ENCODE measurements at regions of chr11 and their contacts with region 1.

Region 1: DNA sequence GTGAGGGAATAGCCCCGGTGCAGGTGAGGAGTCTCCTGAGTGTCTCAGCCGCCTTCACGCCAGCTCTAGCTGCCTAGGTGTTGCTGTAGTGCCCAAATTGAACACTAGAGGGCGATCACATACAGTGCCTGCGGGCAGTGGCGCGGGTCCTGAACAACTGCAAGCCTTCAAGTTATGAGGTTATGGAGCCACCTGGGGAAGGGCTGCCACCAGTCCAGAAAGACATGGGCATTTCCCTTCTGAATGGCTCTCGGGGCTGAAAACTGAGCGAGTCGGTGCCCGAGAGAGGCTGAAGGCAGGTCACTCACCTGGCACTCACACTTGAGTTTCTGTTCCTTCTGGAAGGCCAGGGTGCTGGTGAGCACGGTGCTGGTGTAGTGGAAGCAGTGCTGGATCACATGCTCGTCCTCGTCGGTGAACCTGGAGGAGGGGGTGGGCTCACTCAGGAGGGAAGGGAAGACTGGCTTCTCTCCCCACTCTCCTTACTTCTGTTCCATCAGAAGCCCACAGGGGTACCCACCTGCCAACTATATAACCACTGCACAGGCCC is 88.4 kb downstream of the PDE2A start:
- DNase-seq: peak; percentile 49
- ATAC-seq: peak; percentile 81
- H3K4me3 Mint-ChIP-seq: peak overlapping the region; percentile 87
- H3K27ac Mint-ChIP-seq: no peak overlapping the region
- H3K4me1 Mint-ChIP-seq: peaks cover 31% of the 10 kb centered on the region
- H3K27me3 Mint-ChIP-seq: peaks cover 21% of the 10 kb centered on the region
- CTCF ChIP-seq: peak; percentile 54

Region 2: DNA sequence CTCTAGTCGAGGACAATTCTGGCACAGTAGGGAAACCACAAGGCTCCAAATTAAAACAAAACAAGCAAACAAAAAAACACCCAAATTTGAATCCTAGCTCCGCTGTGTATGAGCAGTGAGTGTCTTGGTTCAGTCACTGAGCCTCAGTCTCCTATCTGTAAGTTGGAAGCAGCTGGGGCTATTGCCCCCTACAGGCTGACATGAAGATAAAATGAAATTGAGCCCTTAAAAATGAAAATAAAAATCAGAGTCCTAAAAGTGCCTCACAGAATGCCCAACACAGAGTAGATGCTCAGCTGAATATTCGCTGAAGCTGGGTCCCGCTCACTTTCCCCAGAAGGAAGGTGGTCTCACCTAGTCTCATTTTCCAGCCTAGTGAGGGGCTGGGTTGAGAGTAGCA is 23.2 kb after region 1 on chr11:
- CTCF ChIA-PET with region 1: interaction called, 14 read pairs
- POLR2A ChIA-PET with region 1: no interaction called
- intact Hi-C with region 1: loop called (anchors 1 kb)
- DNase-seq: no peak
- ATAC-seq: no peak
- H3K4me3 Mint-ChIP-seq: no peak overlapping the region
- H3K27ac Mint-ChIP-seq: no peak overlapping the region
- H3K4me1 Mint-ChIP-seq: peaks cover 11% of the 10 kb centered on the region
- H3K27me3 Mint-ChIP-seq: peaks cover 15% of the 10 kb centered on the region
- CTCF ChIP-seq: peak; percentile 28

Region 3: DNA sequence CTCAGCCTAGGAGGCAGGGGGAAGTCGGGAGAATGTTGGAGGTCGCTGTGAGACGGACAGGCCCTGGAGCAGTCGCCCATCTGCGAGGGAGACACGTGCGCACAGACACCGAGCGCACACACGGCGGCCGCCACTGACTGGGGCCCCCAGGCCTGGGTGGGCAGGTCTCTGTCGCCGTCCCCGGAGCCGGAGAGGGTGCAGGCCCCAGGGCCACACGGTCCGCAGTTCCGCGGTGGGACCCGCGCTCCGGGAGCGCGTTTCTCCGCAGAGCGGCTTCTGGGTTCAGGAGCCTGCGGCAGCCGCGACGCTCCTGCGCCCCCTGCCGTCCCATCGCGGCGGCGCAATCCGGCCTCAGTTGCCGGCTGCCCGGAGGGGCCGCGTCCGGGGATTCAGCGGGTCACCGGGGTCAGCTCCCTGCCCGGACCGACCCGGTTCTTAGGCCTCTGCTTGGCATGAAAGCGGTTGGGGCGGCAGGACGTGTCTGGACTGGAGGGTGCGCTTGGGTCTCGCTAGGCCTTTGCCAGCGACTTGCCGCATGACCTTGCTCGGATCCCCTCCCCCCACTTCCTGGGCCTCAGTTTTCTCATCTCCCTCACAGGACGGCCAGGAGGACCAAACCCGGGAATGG is 57.2 kb after region 1 on chr11:
- CTCF ChIA-PET with region 1: interaction called, 20 read pairs
- POLR2A ChIA-PET with region 1: no interaction called
- intact Hi-C with region 1: loop called (anchors 1 kb)
- DNase-seq: peak; percentile 78
- ATAC-seq: peak; percentile 85
- H3K4me3 Mint-ChIP-seq: peak overlapping the region; percentile 67
- H3K27ac Mint-ChIP-seq: no peak overlapping the region
- H3K4me1 Mint-ChIP-seq: no peaks in the 10 kb centered on the region
- H3K27me3 Mint-ChIP-seq: peaks cover 7% of the 10 kb centered on the region
- CTCF ChIP-seq: peak; percentile 72

Region 4: DNA sequence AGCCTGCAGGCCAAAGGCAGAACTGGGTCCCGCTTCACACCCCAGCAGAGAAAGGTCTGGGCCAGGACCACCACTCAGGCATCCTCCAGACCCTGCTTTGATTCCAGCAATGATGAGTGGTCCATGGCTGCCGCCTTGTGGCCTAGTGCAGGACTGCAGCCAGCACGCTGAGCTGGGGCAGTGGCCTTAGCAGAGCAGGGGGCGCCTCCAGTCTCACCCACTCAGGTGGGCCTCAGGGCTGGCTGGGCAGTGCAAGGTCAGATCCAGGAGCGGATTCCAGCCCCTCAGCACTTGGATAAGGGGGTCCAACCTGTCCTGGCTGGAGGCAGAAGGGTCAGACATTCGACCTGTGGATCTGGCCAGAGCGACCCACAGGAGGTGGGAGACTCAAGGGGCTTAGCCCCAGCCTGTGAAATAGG is 98.0 kb after region 1 on chr11:
- CTCF ChIA-PET with region 1: interaction called, 54 read pairs
- POLR2A ChIA-PET with region 1: interaction called, 3 read pairs
- intact Hi-C with region 1: loop called (anchors 1 kb)
- DNase-seq: peak; percentile 70
- ATAC-seq: peak; percentile 79
- H3K4me3 Mint-ChIP-seq: no peak overlapping the region
- H3K27ac Mint-ChIP-seq: no peak overlapping the region
- H3K4me1 Mint-ChIP-seq: peaks cover 1% of the 10 kb centered on the region
- H3K27me3 Mint-ChIP-seq: no peaks in the 10 kb centered on the region
- CTCF ChIP-seq: peak; percentile 49

Region 5: DNA sequence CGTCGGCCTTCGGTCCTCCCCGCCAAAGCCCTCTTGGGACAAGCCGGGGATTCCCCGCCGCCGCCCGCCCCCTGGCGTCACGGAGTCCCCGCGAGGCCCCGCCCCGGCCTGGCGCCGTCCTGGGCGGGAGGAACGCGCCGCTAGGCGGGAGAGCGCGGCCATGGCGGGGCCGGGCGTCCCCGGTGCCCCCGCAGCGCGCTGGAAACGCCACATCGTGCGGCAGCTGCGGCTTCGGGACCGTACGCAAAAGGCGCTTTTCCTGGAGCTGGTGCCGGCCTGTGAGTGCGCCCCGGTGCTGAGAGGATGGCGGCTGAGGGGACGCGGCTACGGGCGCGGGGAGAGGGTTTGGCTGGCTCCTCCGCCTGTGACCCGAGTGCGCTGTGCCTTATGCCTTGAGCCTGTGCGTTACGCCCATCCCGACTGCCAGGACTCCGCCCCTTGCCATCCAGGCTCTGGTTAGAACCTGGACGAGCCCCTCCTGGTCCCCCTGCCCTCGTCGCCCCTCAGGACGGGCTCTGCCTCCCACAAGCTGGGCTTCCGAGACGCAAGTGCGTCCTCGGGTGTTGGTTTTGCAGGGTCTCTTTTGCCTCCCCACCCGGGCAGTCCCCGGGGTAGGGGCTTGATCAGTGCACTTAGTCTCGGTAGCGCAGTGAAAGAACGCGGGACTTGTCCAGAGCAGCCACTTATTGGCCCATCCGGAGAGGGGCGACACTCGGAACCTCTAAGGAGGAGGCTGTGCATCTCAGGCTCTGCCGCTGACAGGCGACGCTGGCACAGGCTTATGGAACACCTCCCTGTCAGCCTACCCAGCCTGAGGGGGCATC is 228.7 kb after region 1 on chr11 and contains the start of gene ATG16L2:
- CTCF ChIA-PET with region 1: no interaction called
- POLR2A ChIA-PET with region 1: no interaction called
- intact Hi-C with region 1: loop called (anchors 10 kb)
- DNase-seq: peak; percentile 97
- ATAC-seq: peak; percentile 75
- H3K4me3 Mint-ChIP-seq: peak within 1 kb of the TSS; percentile 98
- H3K27ac Mint-ChIP-seq: peak within 1 kb of the TSS; percentile 94
- H3K4me1 Mint-ChIP-seq: peaks cover 54% of the 10 kb centered on the region
- H3K27me3 Mint-ChIP-seq: no peaks in the 10 kb centered on the region
- CTCF ChIP-seq: no peak
- total RNA-seq, gene ATG16L2: 73.5 and 96.7 TPM in 2 replicates

Measured in activated B cell treated with CpG ODN at 0.5 μM for 24 hours (primary cell).